ENCODE measurements at regions of chr1 and their contacts with region 1.

Region 1: GRCh38 chr1:33367485-33368405 is 46.8 kb upstream of the A3GALT2 start:
- DNase-seq: no peak
- ATAC-seq: peak; percentile 97
- H3K4me3 ChIP-seq: no peak overlapping the region
- H3K27ac ChIP-seq: no peak overlapping the region
- H3K4me1 ChIP-seq: no peaks in the 10 kb centered on the region
- H3K27me3 ChIP-seq: peaks cover 0 to 6% of the 10 kb centered on the region in 2 experiments; a peak in 1 of 4 replicates
- CTCF ChIP-seq: peak; percentile 96 to 99 (median 97); a peak in 5 of 6 replicates
- EP300 ChIP-seq: no peak
- POLR2A ChIP-seq: no peak
- RAD21 ChIP-seq: peak; percentile 98

Region 2: GRCh38 chr1:33111970-33112369 is 255.8 kb before region 1 on chr1:
- CTCF ChIA-PET with region 1: interaction called, 3 read pairs
- POLR2A ChIA-PET with region 1: no interaction called
- RAD21 ChIA-PET with region 1: no interaction called
- SMC1A ChIA-PET with region 1: no interaction called
- in situ Hi-C with region 1: no loop called
- intact Hi-C with region 1: loop called (anchors 5 kb)
- DNase-seq: no peak
- ATAC-seq: peak; percentile 79
- H3K4me3 ChIP-seq: no peak overlapping the region
- H3K27ac ChIP-seq: no peak overlapping the region
- H3K4me1 ChIP-seq: no peaks in the 10 kb centered on the region
- H3K27me3 ChIP-seq: no peaks in the 10 kb centered on the region
- CTCF ChIP-seq: peak; percentile 37 to 64 (median 44); a peak in 4 of 6 replicates
- EP300 ChIP-seq: no peak
- POLR2A ChIP-seq: no peak
- RAD21 ChIP-seq: peak; percentile 59

Region 3: DNA sequence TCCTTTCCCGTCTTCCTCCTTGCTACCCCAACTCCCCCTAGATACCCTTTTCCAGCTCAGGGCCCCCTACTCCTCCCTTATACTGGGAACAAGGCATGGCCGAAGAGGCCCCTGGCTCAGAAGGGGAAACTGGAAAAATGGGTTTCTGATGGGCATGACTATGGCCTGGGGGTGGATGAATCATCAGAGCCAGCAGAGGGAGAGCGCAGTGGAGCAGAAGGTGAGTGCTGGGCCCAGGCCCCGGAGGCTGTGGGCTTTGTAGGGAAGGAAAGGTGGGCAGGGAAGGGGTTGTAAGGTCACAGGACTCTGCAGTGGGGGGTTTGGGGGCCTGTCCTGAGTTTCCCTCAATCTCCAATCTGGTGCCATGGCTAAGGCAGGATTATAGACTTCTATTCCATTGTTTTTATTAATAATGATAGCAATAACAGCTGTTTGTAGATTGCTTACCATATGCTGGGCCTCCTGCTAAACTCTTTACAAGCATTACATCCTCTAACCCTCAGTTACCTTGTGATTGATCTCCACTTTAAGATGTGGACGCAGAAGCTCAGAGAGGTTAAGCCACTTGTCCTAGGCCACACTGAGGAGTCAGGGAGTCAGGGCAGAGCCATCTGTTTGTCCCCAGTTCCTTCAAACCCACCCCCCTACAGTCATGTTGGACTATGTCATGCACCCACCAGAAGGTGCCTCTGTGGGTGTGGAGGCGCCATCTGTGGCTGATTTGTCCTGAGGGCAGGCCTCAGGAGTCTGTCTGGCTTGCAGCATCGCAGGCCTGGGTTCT is 147.7 kb before region 1 on chr1:
- CTCF ChIA-PET with region 1: interaction called, 3 read pairs
- POLR2A ChIA-PET with region 1: no interaction called
- RAD21 ChIA-PET with region 1: no interaction called
- SMC1A ChIA-PET with region 1: no interaction called
- in situ Hi-C with region 1: no loop called
- intact Hi-C with region 1: loop called (anchors 5 kb)
- DNase-seq: no peak
- ATAC-seq: no peak
- H3K4me3 ChIP-seq: no peak overlapping the region
- H3K27ac ChIP-seq: no peak overlapping the region
- H3K4me1 ChIP-seq: no peaks in the 10 kb centered on the region
- H3K27me3 ChIP-seq: no peaks in the 10 kb centered on the region
- CTCF ChIP-seq: no peak
- EP300 ChIP-seq: no peak
- POLR2A ChIP-seq: no peak
- RAD21 ChIP-seq: no peak

Region 4: GRCh38 chr1:33388805-33389771 is 21.3 kb after region 1 on chr1:
- CTCF ChIA-PET with region 1: no interaction called
- POLR2A ChIA-PET with region 1: no interaction called
- RAD21 ChIA-PET with region 1: no interaction called
- SMC1A ChIA-PET with region 1: no interaction called
- in situ Hi-C with region 1: no loop called
- intact Hi-C with region 1: no loop called
- DNase-seq: no peak
- ATAC-seq: no peak
- H3K4me3 ChIP-seq: no peak overlapping the region
- H3K27ac ChIP-seq: no peak overlapping the region
- H3K4me1 ChIP-seq: peaks cover 9% of the 10 kb centered on the region
- H3K27me3 ChIP-seq: no peaks in the 10 kb centered on the region; a peak in 1 of 4 replicates
- CTCF ChIP-seq: no peak
- EP300 ChIP-seq: no peak
- POLR2A ChIP-seq: no peak
- RAD21 ChIP-seq: no peak

Region 5: GRCh38 chr1:33455539-33456501 is 88.1 kb after region 1 on chr1:
- CTCF ChIA-PET with region 1: interaction called, 15 read pairs
- POLR2A ChIA-PET with region 1: no interaction called
- RAD21 ChIA-PET with region 1: interaction called, 8 read pairs
- SMC1A ChIA-PET with region 1: interaction called, 5 read pairs
- in situ Hi-C with region 1: no loop called
- intact Hi-C with region 1: no loop called
- DNase-seq: no peak
- ATAC-seq: peak; percentile 94
- H3K4me3 ChIP-seq: no peak overlapping the region
- H3K27ac ChIP-seq: no peak overlapping the region
- H3K4me1 ChIP-seq: peaks cover 27% of the 10 kb centered on the region
- H3K27me3 ChIP-seq: no peaks in the 10 kb centered on the region
- CTCF ChIP-seq: peak; percentile 74 to 80 (median 74)
- EP300 ChIP-seq: no peak
- POLR2A ChIP-seq: no peak
- RAD21 ChIP-seq: peak; percentile 81

Region 6: DNA sequence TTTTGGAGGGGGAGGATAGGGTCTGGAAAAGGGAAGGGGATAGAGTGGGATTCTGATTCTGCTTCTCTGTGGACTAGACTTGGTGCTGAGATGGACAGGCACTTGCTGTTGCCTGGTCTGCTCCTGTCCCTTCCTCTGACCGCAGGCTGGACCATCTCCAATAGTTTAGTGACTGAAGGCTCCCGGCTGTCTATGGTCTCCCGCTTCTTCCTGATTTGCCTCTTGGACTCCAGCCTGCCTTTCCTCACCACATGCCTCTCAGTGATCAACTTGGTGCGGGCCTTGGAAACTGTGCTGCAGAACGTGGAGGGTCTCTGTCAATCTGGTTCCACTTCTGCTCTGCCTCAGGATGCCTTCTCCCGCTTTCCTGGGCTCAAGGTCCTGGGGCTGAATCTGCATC is 98.4 kb after region 1 on chr1:
- CTCF ChIA-PET with region 1: interaction called, 23 read pairs
- POLR2A ChIA-PET with region 1: interaction called, 3 read pairs
- RAD21 ChIA-PET with region 1: interaction called, 15 read pairs
- SMC1A ChIA-PET with region 1: interaction called, 17 read pairs
- in situ Hi-C with region 1: loop called (anchors 5 kb)
- intact Hi-C with region 1: loop called (anchors 1 kb)
- DNase-seq: no peak
- ATAC-seq: no peak
- H3K4me3 ChIP-seq: no peak overlapping the region
- H3K27ac ChIP-seq: no peak overlapping the region
- H3K4me1 ChIP-seq: peaks cover 35% of the 10 kb centered on the region
- H3K27me3 ChIP-seq: no peaks in the 10 kb centered on the region
- CTCF ChIP-seq: no peak
- EP300 ChIP-seq: no peak
- POLR2A ChIP-seq: no peak
- RAD21 ChIP-seq: no peak